CD14-positive monocyte (primary cell): ENCODE measurements at regions of chr6 and their contacts with region 1.

Region 1: GRCh38 chr6:149834513-149835481 is 29.4 kb downstream of the LRP11 start:
- DNase-seq: peak; percentile 43 to 55 (median 54)
- H3K4me3 ChIP-seq: no peak overlapping the region
- H3K4me3 Mint-ChIP-seq: no peak overlapping the region
- H3K27ac ChIP-seq: no peak overlapping the region
- H3K27ac Mint-ChIP-seq: no peak overlapping the region
- H3K4me1 ChIP-seq: no peaks in the 10 kb centered on the region
- H3K4me1 Mint-ChIP-seq: no peaks in the 10 kb centered on the region
- H3K27me3 ChIP-seq: no peaks in the 10 kb centered on the region
- H3K27me3 Mint-ChIP-seq: peaks cover 0 to 3% (median 0%) of the 10 kb centered on the region in 3 donors
- CTCF ChIP-seq: peak; percentile 89

Region 2: DNA sequence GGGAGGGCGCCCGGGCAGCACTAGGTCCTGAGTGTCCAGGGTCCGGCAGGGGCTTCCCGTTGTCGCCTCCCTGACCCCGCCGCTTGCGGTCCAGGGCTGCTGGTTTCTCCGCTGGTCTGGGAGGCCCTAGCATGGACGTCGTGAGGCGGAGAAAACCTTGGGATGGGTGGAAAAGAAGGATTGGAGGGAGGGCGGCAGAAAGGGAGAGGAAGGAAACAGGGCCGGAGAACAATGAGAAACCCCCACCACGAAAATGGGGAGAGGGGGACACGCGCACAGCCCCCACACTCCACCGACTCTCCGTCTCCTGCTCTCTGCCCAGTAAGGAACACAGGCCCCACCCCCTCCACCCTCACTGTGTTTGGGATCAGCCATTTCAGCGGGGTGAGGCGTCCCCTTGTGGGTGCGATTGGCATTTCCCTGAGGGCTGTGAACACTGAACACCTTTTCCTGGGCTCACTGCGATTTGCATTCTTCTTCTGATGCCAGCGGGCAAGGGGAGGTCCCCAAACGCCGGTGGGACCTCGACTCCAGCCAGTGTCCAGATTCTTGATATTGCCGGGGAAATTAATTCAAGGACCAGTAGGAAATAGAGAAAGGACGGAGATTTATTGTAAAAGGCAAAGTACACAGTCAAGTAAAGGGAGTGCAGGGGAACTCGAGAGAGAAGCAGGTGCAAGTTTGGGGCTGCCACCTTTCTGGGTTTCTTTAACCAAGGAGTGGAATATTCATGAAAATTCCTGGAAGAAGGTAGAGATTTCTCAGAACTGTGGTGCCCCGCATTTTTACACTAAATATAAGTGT is 91.4 kb after region 1 on chr6:
- intact Hi-C with region 1: loop called (anchors 5 kb)
- DNase-seq: peak; percentile 33 to 63 (median 52)
- H3K4me3 ChIP-seq: peak overlapping the region; percentile 36 to 73 (median 48)
- H3K4me3 Mint-ChIP-seq: peak overlapping the region; percentile 77 to 96
- H3K27ac ChIP-seq: no peak overlapping the region
- H3K27ac Mint-ChIP-seq: peak overlapping the region in 2 of 7 donors; percentile 39 to 50
- H3K4me1 ChIP-seq: peaks cover 28 to 29% of the 10 kb centered on the region in 2 donors
- H3K4me1 Mint-ChIP-seq: peaks cover 31% of the 10 kb centered on the region
- H3K27me3 ChIP-seq: peaks cover 38 to 85% of the 10 kb centered on the region in 2 donors
- H3K27me3 Mint-ChIP-seq: peaks cover 85 to 93% (median 86%) of the 10 kb centered on the region in 3 donors
- CTCF ChIP-seq: peak; percentile 77

Region 3: DNA sequence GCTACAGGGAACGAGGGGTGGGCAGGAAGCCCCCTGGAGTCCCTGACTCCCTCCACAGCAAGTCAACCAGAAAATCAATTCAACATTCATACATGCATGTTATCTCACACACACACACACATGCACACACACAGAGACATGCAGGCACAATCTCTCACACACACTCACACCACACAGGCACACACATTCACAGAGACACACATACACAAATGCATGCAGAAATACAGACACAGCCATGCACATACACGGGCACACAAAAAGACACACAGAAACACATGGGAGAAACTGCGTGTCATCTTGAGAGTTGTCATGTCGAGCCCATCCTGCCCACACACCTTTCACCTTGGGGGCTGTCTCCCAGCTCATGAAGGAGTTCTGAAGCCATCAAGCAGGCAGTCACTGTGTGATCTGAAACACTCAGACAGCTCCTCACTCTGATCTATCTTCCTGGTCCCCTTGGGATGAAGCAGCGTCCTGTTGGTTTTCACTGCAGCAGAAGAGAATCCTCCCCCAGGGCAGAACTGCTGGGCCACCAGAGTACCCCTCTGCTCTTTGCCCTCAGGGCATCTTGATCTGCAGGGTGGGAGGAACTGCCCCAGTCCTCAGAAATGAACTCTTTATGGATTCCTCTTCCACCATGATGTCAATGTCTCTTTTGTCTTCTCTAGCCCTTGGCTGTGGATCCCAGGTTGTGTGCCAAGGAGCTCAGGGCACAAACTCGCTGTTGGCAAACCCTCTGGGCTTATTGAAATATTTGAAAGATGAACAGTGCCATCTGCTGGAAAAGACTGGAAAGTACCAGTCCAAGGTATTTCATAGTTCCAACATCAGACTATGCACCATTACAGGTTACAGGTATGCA is 181.8 kb after region 1 on chr6:
- intact Hi-C with region 1: loop called in 1 of 2 experiments (anchors 5 kb)
- DNase-seq: peak; percentile 42 to 74 (median 59)
- H3K4me3 ChIP-seq: no peak overlapping the region
- H3K4me3 Mint-ChIP-seq: peak overlapping the region in 1 of 2 donors; percentile 89
- H3K27ac ChIP-seq: no peak overlapping the region
- H3K27ac Mint-ChIP-seq: no peak overlapping the region
- H3K4me1 ChIP-seq: peaks cover 4% of the 10 kb centered on the region in 2 donors
- H3K4me1 Mint-ChIP-seq: peaks cover 10% of the 10 kb centered on the region
- H3K27me3 ChIP-seq: peaks cover 48 to 65% of the 10 kb centered on the region in 2 donors
- H3K27me3 Mint-ChIP-seq: peaks cover 60 to 79% (median 63%) of the 10 kb centered on the region in 3 donors
- CTCF ChIP-seq: peak; percentile 84

Region 4: DNA sequence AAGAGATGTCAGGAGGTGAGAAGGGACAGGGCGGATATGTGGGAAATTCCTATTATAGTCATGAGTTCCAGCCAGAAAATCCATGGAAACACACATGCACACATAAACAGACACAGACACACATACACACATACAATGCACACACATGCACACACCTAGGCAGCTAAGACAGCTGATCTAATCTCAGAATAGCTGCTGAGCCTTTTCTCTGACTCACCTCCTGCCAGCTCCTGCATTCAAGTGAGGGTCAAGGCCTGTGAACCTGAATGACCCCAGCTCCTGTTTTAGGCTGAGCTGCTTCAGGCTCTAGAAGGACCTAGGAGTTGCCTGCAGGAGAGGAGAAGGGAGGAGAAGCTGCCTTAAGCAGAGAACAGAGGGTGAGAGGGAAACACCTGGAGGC is 212.1 kb after region 1 on chr6:
- intact Hi-C with region 1: no loop called
- DNase-seq: no peak
- H3K4me3 ChIP-seq: no peak overlapping the region
- H3K4me3 Mint-ChIP-seq: no peak overlapping the region
- H3K27ac ChIP-seq: no peak overlapping the region
- H3K27ac Mint-ChIP-seq: no peak overlapping the region
- H3K4me1 ChIP-seq: no peaks in the 10 kb centered on the region
- H3K4me1 Mint-ChIP-seq: no peaks in the 10 kb centered on the region
- H3K27me3 ChIP-seq: no peaks in the 10 kb centered on the region
- H3K27me3 Mint-ChIP-seq: peaks cover 15 to 33% (median 22%) of the 10 kb centered on the region in 3 donors
- CTCF ChIP-seq: no peak